ENCODE measurements at regions of chr22 and their contacts with region 1.

Region 1: GRCh38 chr22:37148742-37149665 is 712 bp downstream of the IL2RB start:
- DNase-seq: no peak
- H3K4me3 Mint-ChIP-seq: peak overlapping the region; percentile 88
- H3K27ac Mint-ChIP-seq: peak overlapping the region; percentile 93
- H3K4me1 Mint-ChIP-seq: peaks cover 64% of the 10 kb centered on the region
- H3K27me3 Mint-ChIP-seq: no peaks in the 10 kb centered on the region

Region 2: GRCh38 chr22:37077884-37078485 is 71.0 kb before region 1 on chr22:
- CTCF ChIA-PET with region 1: interaction called, 19 read pairs
- DNase-seq: peak; percentile 89
- H3K4me3 Mint-ChIP-seq: peak overlapping the region; percentile 1
- H3K27ac Mint-ChIP-seq: peak overlapping the region; percentile 95
- H3K4me1 Mint-ChIP-seq: peaks cover 64% of the 10 kb centered on the region
- H3K27me3 Mint-ChIP-seq: peaks cover 34% of the 10 kb centered on the region

Region 3: DNA sequence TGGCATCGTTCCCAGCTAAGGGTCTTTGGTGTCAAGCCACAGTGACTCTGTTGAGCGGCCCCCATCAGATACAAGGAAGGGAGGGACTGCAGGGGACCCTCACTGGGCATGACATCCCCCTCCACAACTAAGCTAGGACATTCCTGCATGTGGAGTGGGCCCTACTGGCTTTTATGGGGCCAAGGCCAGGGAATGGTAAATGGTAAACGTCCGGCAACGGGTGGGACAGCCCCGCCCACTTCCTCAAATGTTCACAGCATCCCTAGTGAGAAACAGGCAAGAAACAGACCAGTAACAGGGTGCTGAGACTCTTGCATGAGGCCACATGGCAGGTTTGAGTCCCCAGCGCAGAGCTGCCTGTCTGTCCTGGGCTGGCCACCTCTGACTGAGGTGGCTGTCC is 43.9 kb before region 1 on chr22:
- CTCF ChIA-PET with region 1: no interaction called
- DNase-seq: no peak
- H3K4me3 Mint-ChIP-seq: no peak overlapping the region
- H3K27ac Mint-ChIP-seq: no peak overlapping the region
- H3K4me1 Mint-ChIP-seq: peaks cover 18% of the 10 kb centered on the region
- H3K27me3 Mint-ChIP-seq: peaks cover 37% of the 10 kb centered on the region

Region 4: DNA sequence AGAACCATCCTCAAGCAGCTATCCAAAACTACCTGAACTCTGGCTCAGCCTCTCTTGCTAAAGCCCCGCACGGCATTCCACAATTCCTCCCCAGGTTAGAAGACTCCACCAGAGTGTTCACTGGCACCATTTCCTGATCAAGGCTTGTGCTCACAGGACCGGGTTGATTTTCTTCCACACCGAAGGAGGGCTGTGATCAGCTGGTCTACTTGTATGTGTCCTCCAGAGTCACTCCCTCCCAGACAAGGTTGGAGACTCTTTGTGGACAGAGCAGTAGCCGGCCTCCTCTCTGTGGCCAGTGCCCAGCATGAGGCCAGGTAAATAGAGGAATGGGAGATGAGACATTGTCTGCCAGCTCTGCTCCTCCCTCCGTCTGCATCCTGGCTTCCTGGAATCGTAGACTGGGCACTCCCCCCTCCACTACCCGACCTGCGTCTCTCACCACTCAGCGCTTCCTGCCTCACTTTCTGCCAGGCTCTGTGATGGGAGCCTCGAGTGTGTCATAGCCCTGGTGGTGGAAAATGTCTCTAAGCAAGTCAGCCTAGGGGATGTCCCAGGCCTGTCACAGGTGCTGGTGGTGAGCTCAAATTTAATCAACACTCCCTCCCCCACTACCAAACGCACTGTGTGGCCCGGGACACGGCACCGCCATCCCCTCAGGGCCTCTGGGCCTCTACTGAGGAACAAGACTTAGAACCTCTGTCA is 27.0 kb before region 1 on chr22:
- CTCF ChIA-PET with region 1: interaction called, 103 read pairs
- DNase-seq: peak; percentile 96
- H3K4me3 Mint-ChIP-seq: peak overlapping the region; percentile 63
- H3K27ac Mint-ChIP-seq: peak overlapping the region; percentile 98
- H3K4me1 Mint-ChIP-seq: peaks cover 88% of the 10 kb centered on the region
- H3K27me3 Mint-ChIP-seq: no peaks in the 10 kb centered on the region

Region 5: DNA sequence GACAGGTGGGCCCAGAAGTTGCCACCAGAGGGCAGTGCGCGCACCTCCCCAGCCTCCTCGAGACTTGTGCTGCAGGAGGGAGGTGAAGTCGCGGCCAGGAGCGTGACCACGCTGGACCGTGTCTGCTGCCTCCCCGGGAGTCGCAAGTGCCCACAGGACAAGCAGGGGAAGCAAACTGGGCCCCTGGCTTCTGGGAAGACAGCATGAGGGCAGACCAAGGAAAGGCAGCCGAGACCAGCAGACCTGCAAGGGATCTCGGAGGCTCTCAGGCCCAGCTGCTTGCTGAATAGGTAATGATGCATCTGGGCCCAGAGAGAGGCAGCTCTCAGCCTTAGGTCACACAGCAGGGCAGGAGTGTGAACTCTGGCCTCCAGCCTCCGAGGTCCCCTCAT is 17.7 kb after region 1 on chr22:
- CTCF ChIA-PET with region 1: interaction called, 56 read pairs
- DNase-seq: peak; percentile 89
- H3K4me3 Mint-ChIP-seq: peak overlapping the region; percentile 64
- H3K27ac Mint-ChIP-seq: peak overlapping the region; percentile 85
- H3K4me1 Mint-ChIP-seq: peaks cover 89% of the 10 kb centered on the region
- H3K27me3 Mint-ChIP-seq: peaks cover 13% of the 10 kb centered on the region